Posterior vena cava (tissue), 2 donors: ENCODE measurements at regions of chr7 and their contacts with region 1.

Region 1: DNA sequence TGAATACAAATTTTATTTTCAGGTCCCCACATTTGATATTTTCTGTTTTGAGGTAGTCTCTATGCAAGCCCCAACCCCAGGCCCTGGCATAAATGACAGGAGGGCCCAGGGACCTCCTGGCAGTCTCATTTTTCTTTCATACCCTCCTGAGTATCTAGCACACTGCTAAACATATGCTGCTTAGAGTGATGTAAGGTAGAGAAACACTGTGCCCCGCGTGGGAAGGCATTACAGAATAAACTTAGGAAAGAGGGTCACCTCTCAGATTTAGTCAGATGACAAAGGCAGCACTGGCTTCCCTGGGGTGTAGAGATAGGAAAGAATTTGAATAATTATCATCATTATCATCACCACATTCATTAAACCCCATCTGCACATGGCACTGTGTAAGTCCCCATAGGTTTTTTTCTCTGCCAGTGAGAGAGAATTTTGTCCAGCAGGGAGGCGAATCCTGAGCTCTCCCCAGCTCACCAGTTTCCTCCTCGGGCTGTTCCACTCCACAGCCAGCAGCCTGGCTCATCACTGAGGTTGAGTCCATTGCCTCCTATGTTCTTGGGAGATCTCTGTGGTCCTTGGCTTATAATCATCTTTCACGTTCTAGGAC is 507.3 kb upstream of the GALNT17 start:
- DNase-seq: no peak

Region 2: GRCh38 chr7:70406186-70406949 is 218.2 kb before region 1 on chr7:
- intact Hi-C with region 1: no loop called
- DNase-seq: no peak

Region 3: DNA sequence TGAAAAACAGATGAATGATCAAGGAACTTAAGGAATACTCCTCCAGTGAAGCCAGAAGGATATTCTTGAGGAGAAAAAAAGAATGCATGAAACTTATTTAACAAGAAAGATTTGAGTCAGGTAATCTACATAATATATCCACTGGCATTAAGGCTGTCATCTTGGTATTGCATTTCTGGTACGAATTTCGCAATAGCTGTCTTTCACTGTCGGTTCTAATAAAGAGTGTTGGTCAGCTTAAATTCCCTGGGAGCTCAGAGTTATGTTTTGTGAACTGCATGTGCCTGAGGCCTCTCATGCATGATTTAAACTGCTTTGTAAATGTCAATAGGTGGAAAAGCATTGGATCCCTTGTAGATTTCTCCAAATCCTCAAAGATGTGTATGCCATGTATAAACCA is 57.9 kb before region 1 on chr7:
- intact Hi-C with region 1: loop called in 1 of 2 experiments (anchors 2 kb)
- DNase-seq: no peak